Posterior vena cava (tissue), 2 donors: ENCODE measurements at regions of chr4 and their contacts with region 1.

Region 1: DNA sequence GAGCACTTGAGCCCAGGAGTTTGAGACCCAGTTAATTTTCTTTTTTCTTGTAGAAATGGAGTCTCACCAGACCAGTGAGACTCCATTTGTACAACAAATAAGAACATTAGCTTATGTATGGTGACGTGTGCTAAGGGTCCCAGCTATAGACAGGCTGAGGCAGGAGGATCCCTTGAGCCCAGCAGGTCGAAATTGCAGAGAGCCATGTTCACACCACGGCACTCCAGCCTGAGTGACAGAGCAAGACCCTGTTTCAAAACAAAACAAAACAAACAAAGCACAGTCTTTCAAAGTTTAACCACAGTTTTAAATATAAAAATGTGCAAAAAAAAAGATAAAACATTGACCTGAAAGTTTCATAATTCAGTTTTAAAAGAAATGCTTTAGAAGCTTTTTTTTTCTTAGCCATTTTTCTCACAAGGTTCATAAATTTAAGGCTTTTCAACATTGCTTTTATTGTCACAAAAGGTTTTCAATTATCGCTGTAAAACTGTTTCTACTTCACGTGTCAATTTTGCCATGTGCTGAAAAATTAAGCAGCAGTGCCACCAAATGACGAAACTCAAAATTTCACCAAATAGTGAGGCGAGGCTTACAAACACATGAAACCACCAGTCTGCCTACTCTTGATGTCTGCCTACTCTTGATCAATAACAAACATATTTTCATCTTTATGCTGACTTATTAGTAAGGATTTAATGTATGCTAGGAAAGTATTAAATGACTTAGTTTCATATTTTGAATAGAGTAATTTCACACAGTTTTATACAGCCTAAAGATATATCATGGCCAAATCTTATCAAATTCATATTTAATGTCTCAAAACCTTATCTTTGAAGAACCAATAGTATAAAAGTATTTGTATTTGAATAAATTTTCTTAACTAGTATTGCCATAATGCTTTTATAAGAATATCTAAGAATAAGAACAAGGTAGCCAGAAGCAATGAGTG is 126.3 kb downstream of the NEK1 start:
- DNase-seq: no peak

Region 2: GRCh38 chr4:168931182-168931650 is 554.9 kb before region 1 on chr4:
- intact Hi-C with region 1: loop called in 1 of 2 experiments (anchors 10 kb)
- DNase-seq: no peak

Region 3: GRCh38 chr4:169024762-169025161 is 461.3 kb before region 1 on chr4:
- intact Hi-C with region 1: loop called (anchors 10 kb)
- DNase-seq: no peak

Region 4: GRCh38 chr4:169530048-169530447 is 44.0 kb after region 1 on chr4:
- intact Hi-C with region 1: no loop called
- DNase-seq: no peak

Region 5: DNA sequence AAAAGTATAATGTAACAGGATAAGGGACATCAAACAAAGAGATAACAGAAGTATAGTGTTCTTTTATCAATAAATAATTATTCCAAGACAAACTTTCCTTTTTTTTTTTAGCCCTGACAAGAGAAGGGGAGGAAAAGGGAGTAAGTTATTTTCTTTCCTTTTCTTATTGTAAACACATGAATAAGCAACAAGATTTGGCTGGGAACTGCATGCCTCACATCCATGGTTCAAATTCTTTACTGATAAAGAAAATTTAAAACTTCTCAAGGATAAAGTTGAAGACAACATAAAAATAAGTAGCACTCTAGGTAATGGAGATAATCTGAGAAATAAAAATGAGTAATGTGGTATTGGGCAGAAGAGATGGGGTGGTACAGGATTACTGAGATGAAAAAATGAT is 54.7 kb after region 1 on chr4:
- intact Hi-C with region 1: no loop called
- DNase-seq: no peak